MCF 10A (cell line): ENCODE measurements at regions of chr1 and their contacts with region 1.

Region 1: GRCh38 chr1:31663622-31664452 is 19.2 kb upstream of the PEF1 start:
- DNase-seq: peak; percentile 67
- H3K4me3 Mint-ChIP-seq: no peak overlapping the region
- H3K27ac Mint-ChIP-seq: no peak overlapping the region
- H3K4me1 Mint-ChIP-seq: peaks cover 24% of the 10 kb centered on the region
- H3K27me3 Mint-ChIP-seq: no peaks in the 10 kb centered on the region
- CTCF ChIP-seq: peak; percentile 95

Region 2: DNA sequence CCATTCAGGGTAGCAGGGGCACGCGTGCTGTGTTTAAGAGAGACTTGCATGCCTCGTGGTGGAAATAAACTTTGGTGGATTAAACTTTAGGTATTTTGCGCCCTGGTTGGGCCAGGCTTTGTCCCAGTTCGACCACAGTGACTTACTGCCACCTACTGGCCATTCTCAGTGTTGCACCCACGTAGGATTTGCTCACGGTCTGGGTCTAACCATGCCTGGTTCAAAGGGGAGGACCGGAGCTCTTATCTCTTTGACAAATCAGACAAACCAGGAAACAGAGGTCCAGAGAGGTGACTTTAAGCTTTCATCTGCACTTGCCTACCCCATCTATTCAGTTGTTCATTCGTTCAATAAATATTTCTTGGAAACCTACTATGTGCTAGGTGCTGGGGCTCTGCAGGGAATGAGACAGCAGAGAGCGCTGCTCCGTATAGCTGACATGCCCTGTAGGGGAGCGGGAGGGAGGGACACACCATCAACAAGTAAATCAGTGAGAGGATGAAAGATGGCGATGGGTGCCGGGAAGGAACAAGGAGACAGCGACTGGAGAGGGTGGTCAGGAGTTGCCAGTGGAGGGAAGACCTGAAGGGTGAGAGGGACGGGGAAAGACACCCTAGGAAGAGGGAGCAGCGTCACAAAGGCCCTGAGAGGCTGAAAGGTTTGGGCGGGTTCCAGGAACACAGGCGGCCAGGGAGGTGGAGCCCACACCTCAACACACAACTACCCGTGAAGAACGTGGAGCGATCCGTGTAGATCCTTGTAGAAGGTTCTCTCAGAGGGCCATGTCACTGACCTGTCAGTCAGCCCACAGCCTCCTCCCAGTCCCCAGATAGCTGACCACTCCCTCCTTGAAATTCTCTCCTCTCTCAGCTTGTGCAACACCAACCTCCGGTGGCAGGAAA is 114.7 kb before region 1 on chr1:
- CTCF ChIA-PET with region 1: no interaction called
- POLR2A ChIA-PET with region 1: no interaction called
- intact Hi-C with region 1: no loop called
- DNase-seq: peak; percentile 91
- H3K4me3 Mint-ChIP-seq: peak overlapping the region; percentile 73
- H3K27ac Mint-ChIP-seq: peak overlapping the region; percentile 33
- H3K4me1 Mint-ChIP-seq: peaks cover 11% of the 10 kb centered on the region
- H3K27me3 Mint-ChIP-seq: no peaks in the 10 kb centered on the region
- CTCF ChIP-seq: peak; percentile 71

Region 3: DNA sequence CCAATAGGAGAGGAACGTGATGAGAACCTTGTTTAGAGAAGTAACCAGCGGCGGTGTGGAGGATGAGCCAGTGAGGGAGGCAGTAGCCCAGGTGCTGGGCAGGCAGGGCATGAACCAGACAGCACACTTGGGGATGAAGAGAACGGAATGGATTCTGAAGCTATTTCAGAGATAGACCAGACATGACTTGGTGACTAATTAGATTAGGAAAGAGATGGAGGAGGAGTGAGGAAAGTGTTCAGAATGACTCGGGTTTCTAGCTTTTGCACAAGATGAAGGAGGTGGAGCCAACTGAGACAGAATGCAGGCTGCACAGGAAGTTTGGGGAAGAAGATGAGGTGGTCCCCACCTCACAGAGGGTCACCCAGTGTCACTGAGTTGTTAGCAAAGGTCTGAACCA is 24.3 kb before region 1 on chr1:
- CTCF ChIA-PET with region 1: interaction called, 3 read pairs
- POLR2A ChIA-PET with region 1: interaction called, 33 read pairs
- intact Hi-C with region 1: no loop called
- DNase-seq: peak; percentile 70
- H3K4me3 Mint-ChIP-seq: no peak overlapping the region
- H3K27ac Mint-ChIP-seq: no peak overlapping the region
- H3K4me1 Mint-ChIP-seq: peaks cover 19% of the 10 kb centered on the region
- H3K27me3 Mint-ChIP-seq: no peaks in the 10 kb centered on the region
- CTCF ChIP-seq: no peak

Region 4: DNA sequence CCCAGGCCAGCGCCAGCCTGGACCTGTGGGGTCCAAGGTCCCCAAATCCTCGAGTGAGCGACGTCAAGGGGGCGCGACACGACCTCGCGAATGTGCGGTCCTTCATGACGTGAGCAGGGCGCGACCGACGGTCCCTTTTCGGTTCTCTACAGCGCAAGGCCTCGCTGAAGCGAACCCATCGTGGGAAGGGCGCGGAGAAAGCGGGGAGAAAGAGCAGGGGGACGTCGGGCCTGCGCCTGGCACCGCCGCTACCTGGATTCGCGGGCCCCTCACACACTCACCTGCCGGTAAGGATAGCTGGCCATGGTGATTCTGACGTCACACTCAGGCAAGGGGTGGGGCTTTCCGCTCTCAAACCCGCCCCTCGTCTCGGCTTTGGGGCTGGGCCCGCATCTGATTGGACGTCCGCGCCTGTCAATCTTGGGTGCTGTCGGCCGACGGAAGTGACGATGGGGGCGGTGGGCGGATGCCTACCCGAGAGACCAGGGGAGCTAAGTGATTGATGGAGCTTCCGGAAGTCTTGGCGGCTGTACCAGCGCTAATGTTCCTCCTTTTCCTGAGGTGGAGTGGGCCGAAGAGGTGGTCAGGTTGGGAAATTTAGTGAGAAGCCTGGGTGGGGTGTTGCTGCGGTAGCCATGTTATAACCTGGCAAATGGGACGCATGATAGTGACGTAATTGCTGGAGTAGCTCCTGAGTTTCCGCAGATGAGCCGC is 19.1 kb before region 1 on chr1 and contains the start of gene PEF1:
- CTCF ChIA-PET with region 1: interaction called, 5 read pairs
- POLR2A ChIA-PET with region 1: interaction called, 33 read pairs
- intact Hi-C with region 1: no loop called
- DNase-seq: peak; percentile 98
- H3K4me3 Mint-ChIP-seq: peak within 1 kb of the TSS; percentile 89
- H3K27ac Mint-ChIP-seq: peak within 1 kb of the TSS; percentile 100
- H3K4me1 Mint-ChIP-seq: no peaks in the 10 kb centered on the region
- H3K27me3 Mint-ChIP-seq: no peaks in the 10 kb centered on the region
- CTCF ChIP-seq: no peak
- total RNA-seq, gene PEF1: 56.7 and 61.1 TPM in 2 replicates

Region 5: DNA sequence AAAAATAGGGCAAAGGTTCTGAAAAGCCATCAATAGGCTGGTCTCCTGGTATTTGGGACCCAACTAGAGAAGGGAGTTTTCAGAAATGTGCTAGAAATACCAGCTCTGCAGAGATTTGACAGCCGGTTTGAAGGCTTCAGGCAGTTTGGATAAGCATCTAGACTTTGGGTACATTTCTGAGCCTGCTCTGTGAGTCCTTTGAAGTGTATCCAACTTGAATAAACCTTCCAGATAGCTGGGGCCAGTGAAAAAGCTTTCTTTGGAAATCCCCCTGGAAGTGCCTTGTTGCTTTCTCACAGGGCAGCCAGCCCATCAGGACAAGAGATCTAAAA is 12.8 kb before region 1 on chr1:
- CTCF ChIA-PET with region 1: interaction called, 24 read pairs
- POLR2A ChIA-PET with region 1: interaction called, 4 read pairs
- intact Hi-C with region 1: no loop called
- DNase-seq: no peak
- H3K4me3 Mint-ChIP-seq: no peak overlapping the region
- H3K27ac Mint-ChIP-seq: no peak overlapping the region
- H3K4me1 Mint-ChIP-seq: no peaks in the 10 kb centered on the region
- H3K27me3 Mint-ChIP-seq: no peaks in the 10 kb centered on the region
- CTCF ChIP-seq: no peak

Region 6: DNA sequence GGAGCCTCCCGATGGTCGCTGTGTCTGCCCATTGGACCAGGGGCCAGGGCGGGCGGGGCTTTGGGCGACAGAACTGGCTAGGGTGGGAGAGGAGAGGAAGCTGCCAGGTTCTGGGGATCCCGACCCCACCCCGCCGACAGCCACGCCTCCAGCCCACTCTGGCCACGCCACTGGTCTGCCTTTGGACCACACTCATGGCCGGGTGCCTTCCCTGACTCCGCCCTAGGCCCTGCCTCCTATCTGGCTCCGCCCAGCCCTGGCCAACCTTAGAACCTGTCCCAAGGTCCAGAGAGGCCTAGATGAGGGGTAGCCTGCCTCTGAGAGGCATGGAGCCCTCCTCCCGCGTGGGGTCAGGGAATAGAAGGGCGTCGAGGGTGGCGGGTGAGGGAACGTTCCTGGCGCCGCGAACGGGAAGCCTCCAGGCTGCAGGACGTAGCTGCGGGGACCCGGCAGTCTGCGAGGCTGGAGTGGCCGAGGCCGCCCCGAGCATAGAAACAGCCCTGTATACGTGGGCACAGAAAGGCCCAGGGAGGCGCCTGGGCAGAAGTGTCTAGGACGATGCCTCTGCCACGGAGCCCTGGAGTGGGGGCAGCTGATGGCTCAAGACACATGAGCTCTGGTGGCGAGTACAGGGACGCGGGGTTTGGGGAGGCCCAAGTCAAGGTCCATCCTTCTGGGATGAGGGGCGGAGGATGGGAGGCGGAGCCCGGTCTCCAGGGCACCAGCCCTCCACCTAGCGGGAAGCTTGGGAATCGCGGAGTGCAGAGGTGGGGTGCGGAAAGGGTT is 51.4 kb after region 1 on chr1:
- CTCF ChIA-PET with region 1: interaction called, 10 read pairs
- POLR2A ChIA-PET with region 1: interaction called, 9 read pairs
- intact Hi-C with region 1: no loop called
- DNase-seq: peak; percentile 61
- H3K4me3 Mint-ChIP-seq: no peak overlapping the region
- H3K27ac Mint-ChIP-seq: no peak overlapping the region
- H3K4me1 Mint-ChIP-seq: peaks cover 32% of the 10 kb centered on the region
- H3K27me3 Mint-ChIP-seq: peaks cover 13% of the 10 kb centered on the region
- CTCF ChIP-seq: peak; percentile 55

Region 7: GRCh38 chr1:31745096-31745945 is 81.5 kb after region 1 on chr1:
- CTCF ChIA-PET with region 1: interaction called, 96 read pairs
- POLR2A ChIA-PET with region 1: interaction called, 8 read pairs
- intact Hi-C with region 1: loop called (anchors 1 kb)
- DNase-seq: peak; percentile 66
- H3K4me3 Mint-ChIP-seq: no peak overlapping the region
- H3K27ac Mint-ChIP-seq: no peak overlapping the region
- H3K4me1 Mint-ChIP-seq: peaks cover 9% of the 10 kb centered on the region
- H3K27me3 Mint-ChIP-seq: no peaks in the 10 kb centered on the region
- CTCF ChIP-seq: peak; percentile 89

Region 8: GRCh38 chr1:31955917-31956736 is 292.3 kb after region 1 on chr1:
- CTCF ChIA-PET with region 1: interaction called, 3 read pairs
- POLR2A ChIA-PET with region 1: no interaction called
- intact Hi-C with region 1: loop called (anchors 10 kb)
- DNase-seq: peak; percentile 99
- H3K4me3 Mint-ChIP-seq: peak overlapping the region; percentile 39
- H3K27ac Mint-ChIP-seq: peak overlapping the region; percentile 100
- H3K4me1 Mint-ChIP-seq: peaks cover 35% of the 10 kb centered on the region
- H3K27me3 Mint-ChIP-seq: no peaks in the 10 kb centered on the region
- CTCF ChIP-seq: no peak